ENCODE measurements at regions of chr11 and their contacts with region 1.

Region 1: GRCh38 chr11:62753736-62754603 is at the start of gene ZBTB3:
- DNase-seq: peak; percentile 97
- H3K4me3 ChIP-seq: peak within 1 kb of the TSS; percentile 94
- H3K27ac ChIP-seq: peak within 1 kb of the TSS; percentile 80
- H3K27me3 ChIP-seq: no peaks in the 10 kb centered on the region
- CTCF ChIP-seq: no peak
- polyA plus RNA-seq, gene ZBTB3: 3.2 and 3.7 TPM in 2 replicates

Region 2: DNA sequence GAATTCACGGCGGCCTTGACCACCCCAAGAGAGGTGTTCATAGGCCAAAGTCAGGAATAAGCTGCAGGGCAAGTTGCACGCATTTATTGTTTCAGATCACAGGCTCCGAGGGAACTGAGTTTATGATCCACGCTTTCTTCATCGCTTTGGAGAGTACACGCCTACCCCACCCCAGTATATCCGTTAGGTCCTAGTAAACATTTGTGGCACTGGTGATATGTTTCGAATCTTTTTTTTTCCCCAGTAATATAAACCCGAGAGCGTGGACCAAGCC is 108.4 kb before region 1 on chr11:
- CTCF ChIA-PET with region 1: no interaction called
- POLR2A ChIA-PET with region 1: no interaction called
- DNase-seq: no peak
- H3K4me3 ChIP-seq: peak overlapping the region; percentile 93
- H3K27ac ChIP-seq: peak overlapping the region; percentile 94
- H3K27me3 ChIP-seq: no peaks in the 10 kb centered on the region
- CTCF ChIP-seq: no peak

Region 3: DNA sequence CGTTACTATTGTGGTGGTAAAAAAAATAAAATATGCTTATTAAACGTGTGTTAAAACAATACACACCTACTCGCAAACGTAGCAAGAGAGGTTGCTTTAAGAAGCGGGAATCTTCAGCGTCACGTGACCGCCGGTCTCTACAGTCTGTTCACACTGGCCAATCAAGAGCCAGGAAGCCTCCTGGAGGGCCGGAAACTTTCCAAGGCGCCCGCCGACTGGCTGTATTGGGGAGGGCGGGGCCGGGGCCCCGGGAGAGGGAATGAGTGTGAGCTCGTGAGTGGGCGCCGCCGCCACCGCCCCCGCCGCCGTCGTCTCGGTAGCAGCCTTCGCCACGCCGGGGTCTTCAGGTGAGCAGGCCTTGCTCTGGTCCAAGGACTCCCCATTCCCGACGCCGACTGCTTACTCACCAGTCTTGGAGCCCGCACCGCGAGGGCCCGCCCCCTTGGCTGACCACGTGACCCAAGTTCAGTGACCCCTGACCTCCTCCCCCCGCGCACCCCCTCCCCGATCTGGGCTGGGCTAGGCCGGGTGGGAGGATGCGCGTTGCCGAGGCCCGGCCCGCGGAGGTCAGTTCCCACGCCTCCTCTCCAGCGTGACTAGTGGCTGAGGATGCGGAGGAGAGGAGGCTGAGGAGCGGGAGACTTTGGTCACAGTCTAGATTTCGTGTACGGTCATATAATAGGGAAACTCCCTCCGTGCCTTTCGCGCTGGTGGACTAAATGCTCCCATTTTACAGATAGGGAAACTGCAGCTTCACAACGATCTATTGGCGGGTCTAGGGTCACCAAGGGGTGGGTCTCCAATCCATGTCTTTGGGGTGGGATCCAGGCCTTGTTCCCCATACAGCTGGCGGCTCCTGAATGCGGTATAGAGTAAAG is 17.4 kb after region 1 on chr11 and contains the start of gene TAF6L:
- CTCF ChIA-PET with region 1: no interaction called
- POLR2A ChIA-PET with region 1: interaction called, 21 read pairs
- DNase-seq: peak; percentile 89
- H3K4me3 ChIP-seq: peak within 1 kb of the TSS; percentile 77
- H3K27ac ChIP-seq: peak within 1 kb of the TSS; percentile 85
- H3K27me3 ChIP-seq: no peaks in the 10 kb centered on the region
- CTCF ChIP-seq: no peak
- polyA plus RNA-seq, gene TAF6L: 8.9 and 13.4 TPM in 2 replicates

Measured in AG04450 (cell line).